ENCODE measurements at regions of chr4 and their contacts with region 1.

Region 1: DNA sequence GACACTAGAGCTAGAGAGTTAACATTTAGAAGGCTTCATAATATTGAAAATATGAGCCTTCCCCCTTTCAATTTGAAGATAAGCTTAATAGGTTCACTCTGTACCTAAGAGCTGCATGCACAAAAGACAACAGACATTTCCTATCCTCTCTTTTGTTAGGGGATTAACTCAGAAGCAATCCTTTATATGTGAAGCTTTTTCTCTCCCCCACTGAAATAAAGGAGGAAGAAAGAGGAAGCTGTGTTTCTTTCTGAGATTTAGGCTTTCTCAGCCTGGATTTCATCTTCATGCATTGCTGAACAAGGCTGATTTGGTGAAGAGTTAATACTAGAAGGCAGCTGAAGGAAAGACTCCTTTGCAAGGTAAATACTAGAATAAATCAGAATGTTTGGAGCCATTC is 21.0 kb upstream of the CABS1 start:
- DNase-seq: no peak

Region 2: GRCh38 chr4:69896530-69897116 is 417.1 kb before region 1 on chr4:
- CTCF ChIA-PET with region 1: interaction called, 12 read pairs
- POLR2A ChIA-PET with region 1: no interaction called
- DNase-seq: peak; percentile 5

Region 3: GRCh38 chr4:70380578-70380977 is 66.8 kb after region 1 on chr4:
- CTCF ChIA-PET with region 1: no interaction called
- POLR2A ChIA-PET with region 1: no interaction called
- DNase-seq: no peak

Region 4: GRCh38 chr4:70425306-70425705 is 111.6 kb after region 1 on chr4:
- CTCF ChIA-PET with region 1: no interaction called
- POLR2A ChIA-PET with region 1: no interaction called
- DNase-seq: no peak

Measured in HEK293T (cell line).